Endothelial cell of umbilical vein (primary cell): ENCODE measurements at regions of chr7 and their contacts with region 1.

Region 1: DNA sequence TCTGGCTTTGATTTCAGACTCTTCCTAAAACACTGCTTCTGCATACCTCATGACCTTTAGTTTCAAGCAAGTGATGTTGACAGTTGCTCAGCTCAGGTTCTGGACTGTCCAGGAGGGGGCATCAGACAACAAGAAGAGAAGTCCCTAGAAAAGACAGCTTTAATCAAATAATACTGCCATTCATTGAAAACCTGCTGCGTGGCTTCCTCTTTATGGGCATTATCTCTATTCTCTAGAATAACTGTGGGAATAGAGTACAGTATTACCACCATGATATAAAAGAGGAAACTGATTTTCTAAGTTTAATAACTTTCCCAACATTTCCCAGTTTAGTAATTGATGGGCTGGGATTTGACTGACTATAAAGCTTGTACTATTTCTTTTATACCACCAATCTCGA is 170.4 kb downstream of the SNX13 start:
- DNase-seq: peak; percentile 64
- H3K4me3 ChIP-seq: no peak overlapping the region
- H3K27ac ChIP-seq: no peak overlapping the region
- H3K4me1 ChIP-seq: no peaks in the 10 kb centered on the region
- H3K27me3 ChIP-seq: no peaks in the 10 kb centered on the region
- CTCF ChIP-seq: peak; percentile 71 to 75
- POLR2A ChIP-seq: no peak

Region 2: GRCh38 chr7:17745610-17746009 is 24.3 kb before region 1 on chr7:
- CTCF ChIA-PET with region 1: interaction called, 13 read pairs
- POLR2A ChIA-PET with region 1: no interaction called
- dilution Hi-C with region 1: no loop called
- intact Hi-C with region 1: no loop called
- DNase-seq: no peak
- H3K4me3 ChIP-seq: no peak overlapping the region
- H3K27ac ChIP-seq: no peak overlapping the region
- H3K4me1 ChIP-seq: no peaks in the 10 kb centered on the region
- H3K27me3 ChIP-seq: no peaks in the 10 kb centered on the region
- CTCF ChIP-seq: no peak
- POLR2A ChIP-seq: no peak

Region 3: GRCh38 chr7:17822547-17823173 is 52.7 kb after region 1 on chr7:
- CTCF ChIA-PET with region 1: interaction called, 12 read pairs
- POLR2A ChIA-PET with region 1: no interaction called
- dilution Hi-C with region 1: no loop called
- intact Hi-C with region 1: no loop called
- DNase-seq: no peak
- H3K4me3 ChIP-seq: no peak overlapping the region
- H3K27ac ChIP-seq: no peak overlapping the region
- H3K4me1 ChIP-seq: no peaks in the 10 kb centered on the region
- H3K27me3 ChIP-seq: no peaks in the 10 kb centered on the region
- CTCF ChIP-seq: no peak
- POLR2A ChIP-seq: no peak

Region 4: GRCh38 chr7:17965603-17966002 is 195.7 kb after region 1 on chr7:
- CTCF ChIA-PET with region 1: interaction called, 25 read pairs
- POLR2A ChIA-PET with region 1: no interaction called
- dilution Hi-C with region 1: no loop called
- intact Hi-C with region 1: no loop called
- DNase-seq: peak; percentile 87
- H3K4me3 ChIP-seq: no peak overlapping the region
- H3K27ac ChIP-seq: peak overlapping the region; percentile 40
- H3K4me1 ChIP-seq: peaks cover 7% of the 10 kb centered on the region
- H3K27me3 ChIP-seq: no peaks in the 10 kb centered on the region
- CTCF ChIP-seq: no peak
- POLR2A ChIP-seq: no peak

Region 5: GRCh38 chr7:18046601-18047000 is 276.7 kb after region 1 on chr7:
- CTCF ChIA-PET with region 1: no interaction called
- POLR2A ChIA-PET with region 1: no interaction called
- dilution Hi-C with region 1: no loop called
- intact Hi-C with region 1: no loop called
- DNase-seq: no peak
- H3K4me3 ChIP-seq: no peak overlapping the region
- H3K27ac ChIP-seq: no peak overlapping the region
- H3K4me1 ChIP-seq: no peaks in the 10 kb centered on the region
- H3K27me3 ChIP-seq: no peaks in the 10 kb centered on the region
- CTCF ChIP-seq: no peak
- POLR2A ChIP-seq: no peak

Region 6: DNA sequence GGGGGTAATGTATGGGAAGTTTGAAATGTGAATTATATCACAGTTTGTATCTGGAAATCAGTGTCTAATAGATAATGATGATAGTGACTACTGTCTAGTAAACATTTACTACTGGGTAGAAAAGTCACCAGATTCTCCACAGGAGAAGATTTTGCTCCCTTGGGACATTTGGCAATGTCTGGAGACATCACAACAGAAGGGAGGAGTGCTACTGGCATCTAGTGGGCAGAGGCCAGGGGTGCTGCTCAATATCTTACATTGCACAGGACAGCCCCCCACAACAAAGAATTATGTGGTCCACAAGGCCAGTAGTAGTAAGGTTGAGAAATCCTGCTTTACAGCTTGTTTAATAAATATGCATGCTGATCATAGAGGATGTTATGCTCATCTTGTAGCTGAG is 350.1 kb after region 1 on chr7:
- CTCF ChIA-PET with region 1: interaction called, 97 read pairs
- POLR2A ChIA-PET with region 1: no interaction called
- dilution Hi-C with region 1: no loop called
- intact Hi-C with region 1: loop called (anchors 1 kb)
- DNase-seq: peak; percentile 21
- H3K4me3 ChIP-seq: no peak overlapping the region
- H3K27ac ChIP-seq: no peak overlapping the region
- H3K4me1 ChIP-seq: no peaks in the 10 kb centered on the region
- H3K27me3 ChIP-seq: no peaks in the 10 kb centered on the region
- CTCF ChIP-seq: peak; percentile 33 to 54
- POLR2A ChIP-seq: no peak

Region 7: DNA sequence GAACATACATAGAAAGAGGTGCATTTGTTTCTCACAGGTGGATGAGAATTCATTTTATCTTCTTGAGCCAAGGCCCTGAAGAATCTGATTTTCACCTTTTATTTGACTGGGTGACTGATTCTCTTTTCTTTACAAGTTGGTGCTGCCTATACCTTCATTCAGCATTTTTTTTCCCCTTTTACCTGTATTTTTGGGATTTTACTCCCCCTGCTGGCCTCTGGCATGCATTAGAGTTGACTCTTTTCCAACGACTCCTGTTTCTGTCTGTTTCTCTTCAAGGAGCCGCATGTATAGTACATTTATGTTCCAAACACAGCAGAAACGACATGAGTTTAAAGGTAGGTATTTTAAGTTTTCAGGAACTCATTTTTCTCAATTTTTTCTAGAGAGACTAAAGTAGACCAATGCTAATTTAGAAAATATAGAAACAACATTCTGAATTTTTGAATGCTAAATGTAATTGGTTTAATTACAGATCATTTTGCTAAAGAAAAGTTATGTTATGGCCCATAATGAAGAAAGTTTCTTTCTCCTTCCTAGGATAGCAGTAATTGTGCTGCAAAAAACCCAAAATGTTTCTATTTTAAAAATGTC is 575.8 kb after region 1 on chr7:
- CTCF ChIA-PET with region 1: interaction called, 331 read pairs
- POLR2A ChIA-PET with region 1: no interaction called
- dilution Hi-C with region 1: no loop called
- intact Hi-C with region 1: loop called (anchors 1 kb)
- DNase-seq: peak; percentile 72
- H3K4me3 ChIP-seq: no peak overlapping the region
- H3K27ac ChIP-seq: no peak overlapping the region
- H3K4me1 ChIP-seq: no peaks in the 10 kb centered on the region
- H3K27me3 ChIP-seq: no peaks in the 10 kb centered on the region
- CTCF ChIP-seq: peak; percentile 70 to 74
- POLR2A ChIP-seq: no peak